GM12878 (cell line): ENCODE measurements at regions of chr17 and their contacts with region 1.

Region 1: GRCh38 chr17:3738562-3739295 is 15.0 kb downstream of the HASPIN start:
- DNase-seq: no peak
- ATAC-seq: peak; percentile 82
- H3K4me3 ChIP-seq: no peak overlapping the region
- H3K27ac ChIP-seq: no peak overlapping the region
- H3K4me1 ChIP-seq: 0 out of 2 replicates have a peak, but pooled peaks cover 2% of the 10 kb centered on the region
- H3K27me3 ChIP-seq: no peaks in the 10 kb centered on the region
- CTCF ChIP-seq: no peak
- EP300 ChIP-seq: no peak
- POLR2A ChIP-seq: no peak
- RAD21 ChIP-seq: no peak

Region 2: DNA sequence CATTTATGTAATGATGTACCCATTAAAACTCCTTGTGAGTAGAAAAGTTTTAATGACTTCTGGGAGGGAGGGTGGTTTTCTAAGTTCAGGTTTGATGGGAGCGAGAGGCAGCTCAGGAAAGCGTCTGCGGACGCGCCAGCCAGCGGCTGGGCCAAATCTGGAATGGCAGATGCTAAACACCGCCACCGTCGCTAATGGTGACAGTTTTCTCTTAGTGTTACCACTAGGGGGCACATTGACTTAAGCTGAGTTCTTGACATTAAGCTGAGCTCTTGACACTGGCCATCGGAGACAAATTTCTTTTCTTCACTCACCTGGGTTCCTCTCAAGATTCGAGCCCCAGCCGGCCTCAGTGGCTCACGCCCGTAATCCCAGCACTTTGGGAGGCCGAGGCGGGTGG is 136.2 kb before region 1 on chr17:
- CTCF ChIA-PET with region 1: interaction called, 7 read pairs
- POLR2A ChIA-PET with region 1: no interaction called
- RAD21 ChIA-PET with region 1: interaction called, 4 read pairs
- SMC1A ChIA-PET with region 1: interaction called, 3 read pairs
- in situ Hi-C with region 1: no loop called
- intact Hi-C with region 1: loop called (anchors 2 kb)
- DNase-seq: no peak
- ATAC-seq: peak; percentile 88
- H3K4me3 ChIP-seq: no peak overlapping the region
- H3K27ac ChIP-seq: no peak overlapping the region
- H3K4me1 ChIP-seq: no peaks in the 10 kb centered on the region
- H3K27me3 ChIP-seq: no peaks in the 10 kb centered on the region
- CTCF ChIP-seq: peak; percentile 40 to 69 (median 47)
- EP300 ChIP-seq: no peak
- POLR2A ChIP-seq: no peak
- RAD21 ChIP-seq: 0 out of 2 replicates have a peak, but pooled peaks have one; percentile 23

Region 3: DNA sequence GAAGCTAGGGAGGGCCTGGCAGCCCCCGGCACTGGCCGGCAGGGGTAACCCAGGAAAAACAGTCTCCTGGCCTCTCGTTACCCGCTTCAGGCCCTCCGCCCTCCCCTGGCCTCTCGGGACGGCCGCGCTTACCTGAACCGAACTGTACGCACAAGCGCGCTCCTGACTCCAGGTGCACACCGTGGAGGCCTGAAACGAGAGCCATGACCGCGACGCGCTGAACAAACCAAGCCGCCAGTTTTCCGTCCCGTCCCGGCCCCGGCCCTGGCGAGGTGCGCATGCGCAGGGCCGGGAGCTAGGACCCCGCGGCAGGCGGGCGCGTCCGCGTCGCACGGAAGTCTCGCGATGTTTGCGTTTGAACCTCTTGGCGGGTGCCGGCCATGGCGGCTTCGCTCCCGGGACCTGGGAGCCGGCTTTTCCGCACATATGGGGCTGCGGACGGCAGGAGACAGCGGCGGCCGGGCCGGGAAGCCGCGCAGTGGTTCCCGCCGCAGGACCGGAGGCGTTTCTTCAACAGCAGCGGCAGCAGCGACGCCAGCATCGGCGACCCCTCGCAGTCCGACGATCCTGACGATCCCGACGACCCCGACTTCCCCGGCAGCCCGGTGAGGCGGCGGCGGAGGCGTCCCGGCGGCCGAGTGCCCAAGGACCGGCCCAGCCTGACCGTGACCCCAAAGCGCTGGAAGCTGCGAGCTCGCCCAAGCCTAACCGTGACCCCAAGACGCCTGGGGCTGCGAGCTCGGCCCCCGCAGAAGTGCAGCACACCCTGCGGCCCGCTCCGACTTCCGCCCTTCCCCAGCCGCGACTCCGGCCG is 15.0 kb before region 1 on chr17 and contains the start of gene HASPIN:
- CTCF ChIA-PET with region 1: interaction called, 48 read pairs
- POLR2A ChIA-PET with region 1: interaction called, 3 read pairs
- RAD21 ChIA-PET with region 1: interaction called, 21 read pairs
- SMC1A ChIA-PET with region 1: interaction called, 23 read pairs
- in situ Hi-C with region 1: no loop called
- intact Hi-C with region 1: no loop called
- DNase-seq: peak; percentile 62
- ATAC-seq: peak; percentile 93
- H3K4me3 ChIP-seq: peak within 1 kb of the TSS; percentile 93
- H3K27ac ChIP-seq: peak within 1 kb of the TSS; percentile 87
- H3K4me1 ChIP-seq: peaks cover 17% of the 10 kb centered on the region
- H3K27me3 ChIP-seq: no peaks in the 10 kb centered on the region
- CTCF ChIP-seq: peak in 2 of 3 experiments; percentile 12 to 17; a peak in 1 of 6 replicates
- EP300 ChIP-seq: no peak
- POLR2A ChIP-seq: peak; percentile 83
- RAD21 ChIP-seq: no peak
- polyA plus RNA-seq, gene HASPIN: 0.80 to 0.97 TPM

Region 4: DNA sequence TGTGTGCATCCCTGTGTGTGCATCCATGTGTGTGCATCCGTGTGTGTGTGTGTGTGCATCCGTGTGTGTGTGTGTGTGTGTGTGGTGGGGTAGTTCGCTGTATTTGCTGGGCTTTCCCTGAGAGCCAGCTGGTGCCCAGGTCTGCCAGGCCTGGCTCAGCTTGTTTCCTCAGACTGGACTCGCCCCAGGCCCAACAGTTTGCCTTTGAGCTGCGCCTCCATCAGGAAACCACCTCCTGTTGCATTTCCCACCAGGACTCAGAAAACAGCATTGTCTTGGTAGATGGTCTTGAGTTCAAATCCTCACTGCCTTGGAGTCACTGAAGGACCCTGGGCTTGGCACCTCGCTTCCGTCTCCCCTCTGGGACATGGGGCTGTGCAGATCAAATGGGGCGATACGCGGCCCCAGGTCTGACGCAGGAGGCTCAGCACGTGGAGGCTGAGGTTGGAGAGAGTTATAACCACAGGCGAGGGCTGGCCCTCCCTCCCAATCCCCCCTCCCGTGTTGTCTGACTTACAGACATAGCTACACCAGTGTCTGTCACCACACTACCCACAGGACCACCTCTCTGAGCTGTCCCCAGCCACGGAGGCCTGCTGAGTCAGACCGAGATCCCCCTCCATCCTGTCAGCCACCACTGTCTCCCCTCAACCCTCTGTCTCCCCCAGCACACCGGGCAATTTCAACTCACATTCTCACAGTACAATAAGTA is 57.5 kb after region 1 on chr17:
- CTCF ChIA-PET with region 1: interaction called, 13 read pairs
- POLR2A ChIA-PET with region 1: no interaction called
- RAD21 ChIA-PET with region 1: interaction called, 21 read pairs
- SMC1A ChIA-PET with region 1: interaction called, 19 read pairs
- in situ Hi-C with region 1: no loop called
- intact Hi-C with region 1: loop called (anchors 5 kb)
- DNase-seq: peak; percentile 90
- ATAC-seq: peak; percentile 86
- H3K4me3 ChIP-seq: no peak overlapping the region; the same call in 1 of the 2 replicates
- H3K27ac ChIP-seq: peak overlapping the region; percentile 63
- H3K4me1 ChIP-seq: peaks cover 47% of the 10 kb centered on the region
- H3K27me3 ChIP-seq: no peaks in the 10 kb centered on the region
- CTCF ChIP-seq: no peak
- EP300 ChIP-seq: peak; percentile 81 to 88
- POLR2A ChIP-seq: no peak; the same call in 1 of the 2 replicates
- RAD21 ChIP-seq: no peak

Region 5: DNA sequence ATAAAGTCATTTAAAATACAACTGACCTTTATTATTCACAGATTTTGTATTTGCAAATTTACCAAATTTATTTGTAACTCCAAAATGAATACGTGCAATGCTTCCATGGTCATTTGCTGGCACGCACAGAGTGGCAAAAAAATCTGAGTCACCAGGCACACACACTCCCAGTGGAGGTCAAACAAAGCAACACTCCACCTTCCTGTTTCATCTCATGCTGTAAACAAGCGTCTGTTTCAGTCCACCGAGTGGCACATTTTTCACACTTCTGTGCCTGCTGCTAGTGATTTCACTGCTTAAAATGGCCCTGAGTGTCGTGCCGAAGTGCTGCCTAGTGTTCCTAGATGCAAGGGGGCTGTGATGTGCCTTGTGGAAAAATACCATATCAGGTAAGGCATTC is 80.1 kb after region 1 on chr17:
- CTCF ChIA-PET with region 1: interaction called, 371 read pairs
- POLR2A ChIA-PET with region 1: no interaction called
- RAD21 ChIA-PET with region 1: interaction called, 15 read pairs
- SMC1A ChIA-PET with region 1: interaction called, 17 read pairs
- in situ Hi-C with region 1: loop called (anchors 5 kb)
- intact Hi-C with region 1: no loop called
- DNase-seq: no peak
- ATAC-seq: no peak
- H3K4me3 ChIP-seq: no peak overlapping the region
- H3K27ac ChIP-seq: no peak overlapping the region
- H3K4me1 ChIP-seq: peaks cover 6% of the 10 kb centered on the region; the same call in 1 of the 2 replicates
- H3K27me3 ChIP-seq: no peaks in the 10 kb centered on the region
- CTCF ChIP-seq: no peak
- EP300 ChIP-seq: no peak
- POLR2A ChIP-seq: no peak
- RAD21 ChIP-seq: no peak

Region 6: DNA sequence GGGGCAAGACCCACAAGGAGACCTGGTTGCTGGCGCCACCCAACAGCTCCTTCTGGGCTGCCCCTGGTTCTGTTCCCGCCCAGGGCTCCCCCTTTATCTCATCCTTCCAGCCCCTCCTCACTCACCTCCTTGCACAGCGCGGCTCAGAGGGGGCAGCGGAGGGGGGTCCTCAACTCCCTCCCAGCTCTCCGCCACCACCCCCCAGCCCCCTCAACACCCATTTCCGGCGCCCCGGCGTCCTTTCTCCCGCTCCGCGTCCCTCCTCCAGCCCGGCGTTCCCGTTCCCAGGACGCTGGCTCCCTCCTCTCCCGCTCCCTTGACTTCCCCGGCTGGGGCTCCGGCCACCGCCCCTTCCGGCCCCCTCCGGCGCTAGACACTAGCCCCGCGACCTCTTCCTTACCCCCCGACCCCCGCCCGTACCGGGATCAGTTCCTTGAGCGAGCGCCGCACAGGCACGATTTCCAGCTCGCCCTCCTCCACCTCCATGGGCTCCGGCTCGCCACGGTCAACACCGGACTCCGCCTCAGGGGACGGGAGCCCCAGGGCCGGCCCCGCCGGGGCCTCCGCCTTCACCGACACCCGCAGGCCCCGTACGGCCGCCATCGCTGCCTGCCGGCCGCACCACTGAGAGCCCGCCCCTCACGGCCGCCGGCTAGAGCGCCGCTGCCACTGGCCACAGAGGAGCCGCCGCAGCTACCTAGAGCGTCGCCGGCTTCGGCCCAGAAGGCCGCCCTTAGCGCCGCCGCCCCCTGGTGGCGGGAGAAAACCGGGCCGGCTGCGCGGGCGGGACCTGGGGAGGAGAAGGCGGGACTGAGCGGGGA is 107.1 kb after region 1 on chr17 and contains the start of gene NCBP3:
- CTCF ChIA-PET with region 1: interaction called, 115 read pairs
- POLR2A ChIA-PET with region 1: no interaction called
- RAD21 ChIA-PET with region 1: interaction called, 59 read pairs
- SMC1A ChIA-PET with region 1: interaction called, 79 read pairs
- in situ Hi-C with region 1: no loop called
- intact Hi-C with region 1: no loop called
- DNase-seq: peak; percentile 55
- ATAC-seq: peak; percentile 98
- H3K4me3 ChIP-seq: peak within 1 kb of the TSS; percentile 96
- H3K27ac ChIP-seq: peak within 1 kb of the TSS; percentile 79
- H3K4me1 ChIP-seq: peaks cover 17% of the 10 kb centered on the region
- H3K27me3 ChIP-seq: no peaks in the 10 kb centered on the region; a peak in 1 of 4 replicates
- CTCF ChIP-seq: peak; percentile 92 to 99 (median 97)
- EP300 ChIP-seq: no peak
- POLR2A ChIP-seq: peak; percentile 98
- RAD21 ChIP-seq: 0 out of 2 replicates have a peak, but pooled peaks have one; percentile 29
- polyA plus RNA-seq, gene NCBP3: 5.2 to 8.4 TPM

Region 7: GRCh38 chr17:4004517-4005295 is 266.0 kb after region 1 on chr17:
- CTCF ChIA-PET with region 1: interaction called, 7 read pairs
- POLR2A ChIA-PET with region 1: no interaction called
- RAD21 ChIA-PET with region 1: interaction called, 3 read pairs
- SMC1A ChIA-PET with region 1: no interaction called
- in situ Hi-C with region 1: no loop called
- intact Hi-C with region 1: loop called (anchors 10 kb)
- DNase-seq: peak; percentile 5
- ATAC-seq: peak; percentile 90
- H3K4me3 ChIP-seq: no peak overlapping the region
- H3K27ac ChIP-seq: no peak overlapping the region
- H3K4me1 ChIP-seq: no peaks in the 10 kb centered on the region
- H3K27me3 ChIP-seq: no peaks in the 10 kb centered on the region
- CTCF ChIP-seq: peak; percentile 81 to 85 (median 83)
- EP300 ChIP-seq: no peak
- POLR2A ChIP-seq: 0 out of 2 replicates have a peak, but pooled peaks have one; percentile 34
- RAD21 ChIP-seq: peak; percentile 85